Activated CD4-positive, alpha-beta T cell treated with anti-CD3 and anti-CD28 coated beads for 36 hours (primary cell): ENCODE measurements at regions of chr3 and their contacts with region 1.

Region 1: DNA sequence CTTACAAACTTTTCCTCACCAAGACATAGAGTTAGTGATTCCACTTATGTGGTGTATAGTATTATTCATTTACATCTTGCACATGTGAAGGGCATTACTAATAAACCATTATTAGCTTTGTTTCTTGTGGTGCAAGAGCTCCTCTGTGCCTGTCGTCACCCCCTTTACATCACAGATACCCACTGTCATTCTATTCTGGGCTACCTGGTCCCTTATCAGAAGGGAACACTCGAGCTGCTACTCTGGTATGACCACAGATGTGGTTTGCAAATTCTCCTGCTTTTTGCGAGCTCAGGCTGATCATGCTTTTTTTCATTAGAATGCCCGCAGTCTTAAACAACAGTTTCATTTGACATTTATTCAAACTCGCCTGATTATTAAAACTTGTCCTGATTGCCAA is 13.9 kb upstream of the SENP2 start:
- DNase-seq: no peak
- ATAC-seq: no peak
- H3K4me3 Mint-ChIP-seq: no peak overlapping the region
- H3K27ac Mint-ChIP-seq: no peak overlapping the region
- H3K4me1 Mint-ChIP-seq: peaks cover 6% of the 10 kb centered on the region
- H3K27me3 Mint-ChIP-seq: no peaks in the 10 kb centered on the region

Region 2: GRCh38 chr3:185460719-185461350 is 111.3 kb before region 1 on chr3:
- CTCF ChIA-PET with region 1: interaction called, 11 read pairs
- POLR2A ChIA-PET with region 1: no interaction called
- intact Hi-C with region 1: no loop called
- DNase-seq: no peak
- ATAC-seq: no peak
- H3K4me3 Mint-ChIP-seq: no peak overlapping the region
- H3K27ac Mint-ChIP-seq: no peak overlapping the region
- H3K4me1 Mint-ChIP-seq: no peaks in the 10 kb centered on the region
- H3K27me3 Mint-ChIP-seq: no peaks in the 10 kb centered on the region

Region 3: DNA sequence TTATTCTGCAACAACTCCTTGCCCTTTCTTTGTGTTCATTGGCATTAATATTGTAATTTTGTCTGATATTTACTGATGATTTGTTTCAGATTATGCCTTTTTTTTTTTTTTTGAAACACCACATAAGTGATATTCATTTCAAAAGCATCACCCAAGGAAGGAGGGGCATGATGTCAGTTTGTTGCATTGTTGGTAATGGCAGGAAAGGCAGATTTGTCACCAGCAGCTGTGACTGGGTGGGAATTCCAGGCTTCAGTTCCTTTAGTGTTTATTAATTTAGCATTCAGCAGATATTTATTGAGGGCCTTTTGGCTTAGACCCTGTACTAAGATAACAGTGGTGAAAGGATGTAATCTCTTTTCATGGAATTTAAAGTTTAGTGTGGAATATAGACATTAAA is 33.4 kb after region 1 on chr3:
- CTCF ChIA-PET with region 1: interaction called, 3 read pairs
- POLR2A ChIA-PET with region 1: interaction called, 11 read pairs
- intact Hi-C with region 1: no loop called
- DNase-seq: no peak
- ATAC-seq: no peak
- H3K4me3 Mint-ChIP-seq: no peak overlapping the region
- H3K27ac Mint-ChIP-seq: no peak overlapping the region
- H3K4me1 Mint-ChIP-seq: peaks cover 2% of the 10 kb centered on the region
- H3K27me3 Mint-ChIP-seq: no peaks in the 10 kb centered on the region